Astrocyte of the cerebellum (primary cell): ENCODE measurements at regions of chr14 and their contacts with region 1.

Region 1: GRCh38 chr14:56474419-56475022 is 105.1 kb upstream of the TMEM260 start:
- DNase-seq: peak; percentile 28
- H3K4me3 ChIP-seq: no peak overlapping the region
- CTCF ChIP-seq: peak; percentile 86

Region 2: GRCh38 chr14:55446218-55446654 is 1028.3 kb before region 1 on chr14:
- in situ Hi-C with region 1: loop called (anchors 10 kb)
- DNase-seq: peak; percentile 74
- H3K4me3 ChIP-seq: no peak overlapping the region
- CTCF ChIP-seq: peak; percentile 70

Region 3: GRCh38 chr14:56339855-56340701 is 134.4 kb before region 1 on chr14:
- in situ Hi-C with region 1: no loop called
- DNase-seq: peak; percentile 80
- H3K4me3 ChIP-seq: no peak overlapping the region
- CTCF ChIP-seq: peak; percentile 93

Region 4: GRCh38 chr14:56561606-56562005 is 87.1 kb after region 1 on chr14:
- in situ Hi-C with region 1: no loop called
- DNase-seq: no peak
- H3K4me3 ChIP-seq: no peak overlapping the region
- CTCF ChIP-seq: no peak

Region 5: DNA sequence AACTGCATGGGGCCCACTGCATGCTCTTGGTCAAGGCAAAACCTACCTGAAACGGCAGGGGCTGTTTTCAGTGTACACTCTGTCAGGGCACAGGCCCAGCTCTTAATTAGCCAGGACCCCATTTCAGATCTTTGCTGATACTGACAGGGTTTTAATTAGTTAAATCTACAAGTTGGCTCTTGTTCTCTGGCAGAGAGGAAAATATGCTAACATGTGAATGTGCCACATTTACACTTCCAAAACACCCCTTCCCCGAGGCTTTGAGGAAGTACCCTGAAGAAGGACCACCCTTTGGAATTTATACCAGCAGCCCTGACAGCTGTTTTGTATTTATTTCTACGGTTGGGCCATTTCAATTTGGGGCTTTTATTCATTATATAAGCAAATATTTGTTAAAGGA is 269.5 kb after region 1 on chr14:
- in situ Hi-C with region 1: no loop called
- DNase-seq: no peak
- H3K4me3 ChIP-seq: no peak overlapping the region
- CTCF ChIP-seq: no peak